Body of pancreas (tissue), 4 donors: ENCODE measurements at regions of chr9 and their contacts with region 1.

Region 1: DNA sequence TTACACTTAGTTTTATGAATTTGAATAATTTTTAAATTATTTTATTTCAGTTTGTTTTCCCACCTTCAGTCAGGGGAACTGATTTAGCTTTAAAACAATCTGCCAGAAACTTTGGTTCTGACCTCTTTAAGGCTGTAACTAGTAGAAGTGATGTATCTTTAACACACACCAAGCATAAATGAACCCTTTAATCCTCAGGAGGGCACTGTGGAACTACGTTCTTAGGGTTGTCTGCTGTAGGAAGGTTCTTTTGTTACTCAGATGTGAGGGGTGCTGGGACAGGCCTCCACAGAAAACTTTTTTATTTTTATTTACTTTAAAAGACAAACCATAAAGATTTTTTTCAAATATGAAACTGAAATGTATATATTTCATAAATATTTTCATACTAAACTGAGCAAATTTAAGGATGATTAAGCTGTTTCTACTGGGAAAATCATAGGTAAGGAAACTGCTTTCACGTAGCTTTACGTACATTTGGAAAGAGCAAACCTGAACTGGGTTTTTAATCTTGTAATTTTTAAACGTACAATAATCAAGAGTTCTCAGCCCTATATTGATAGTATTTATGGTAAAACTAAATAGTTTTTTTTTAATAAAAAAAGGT is 5.3 kb downstream of the KLF4 start:
- DNase-seq: peak; percentile 28 to 64 (median 31)
- ATAC-seq: peak; percentile 59
- H3K4me3 ChIP-seq: no peak overlapping the region
- H3K27ac ChIP-seq: no peak overlapping the region
- H3K4me1 ChIP-seq: peaks cover 22% of the 10 kb centered on the region
- H3K27me3 ChIP-seq: no peaks in the 10 kb centered on the region
- CTCF ChIP-seq: peak in 6 of 7 experiments; percentile 39 to 79 (median 68)
- POLR2A ChIP-seq: no peak

Region 2: GRCh38 chr9:107548048-107548800 is 64.0 kb after region 1 on chr9:
- intact Hi-C with region 1: no loop called
- DNase-seq: peak in 3 of 4 donors; percentile 9 to 51 (median 38)
- ATAC-seq: peak; percentile 65
- H3K4me3 ChIP-seq: no peak overlapping the region
- H3K27ac ChIP-seq: peak overlapping the region in 1 of 4 donors; percentile 1
- H3K4me1 ChIP-seq: peaks cover 37% of the 10 kb centered on the region
- H3K27me3 ChIP-seq: no peaks in the 10 kb centered on the region
- CTCF ChIP-seq: no peak
- POLR2A ChIP-seq: no peak

Region 3: DNA sequence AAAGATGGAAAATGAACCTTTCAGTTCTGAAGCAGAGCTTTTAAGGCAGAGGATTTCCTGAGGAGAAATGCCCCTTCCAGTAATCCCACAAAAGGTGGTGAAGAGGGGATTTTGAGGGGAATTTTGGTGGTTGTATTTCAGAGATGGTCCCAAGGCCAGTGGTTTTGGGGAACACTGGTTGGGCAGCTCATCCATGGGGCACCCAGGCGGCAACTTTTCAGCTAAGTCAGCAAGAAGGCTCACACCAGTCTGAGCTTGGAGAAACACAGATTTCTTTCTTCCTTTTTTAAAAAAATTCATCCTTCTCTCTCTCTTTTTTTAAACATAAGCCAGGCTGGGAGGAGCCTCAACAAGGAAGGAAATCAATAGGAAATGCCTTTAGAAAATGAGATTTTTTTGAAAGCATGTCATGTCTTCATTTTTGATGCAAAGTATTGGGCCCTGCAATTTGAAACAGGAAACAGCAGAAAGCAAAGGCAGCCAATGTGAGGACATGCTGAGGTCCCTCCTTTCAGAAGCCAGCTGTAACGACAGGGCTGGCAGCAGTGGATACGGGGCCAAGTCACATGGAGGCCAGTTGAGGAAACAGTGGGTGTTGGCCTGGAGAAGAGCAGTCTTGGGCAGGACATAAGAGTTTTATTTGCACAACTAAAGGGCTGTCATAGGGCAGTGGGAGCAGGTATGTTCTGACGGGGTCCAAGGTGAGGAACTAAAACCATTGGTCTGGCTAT is 160.7 kb after region 1 on chr9:
- intact Hi-C with region 1: no loop called
- DNase-seq: peak in 3 of 4 donors; percentile 12 to 61 (median 23)
- ATAC-seq: no peak
- H3K4me3 ChIP-seq: no peak overlapping the region
- H3K27ac ChIP-seq: peak overlapping the region in 1 of 4 donors; percentile 25
- H3K4me1 ChIP-seq: no peaks in the 10 kb centered on the region
- H3K27me3 ChIP-seq: no peaks in the 10 kb centered on the region
- CTCF ChIP-seq: no peak
- POLR2A ChIP-seq: no peak

Region 4: GRCh38 chr9:108565651-108566378 is 1081.6 kb after region 1 on chr9:
- intact Hi-C with region 1: loop called (anchors 5 kb)
- DNase-seq: peak; percentile 58 to 71 (median 68)
- ATAC-seq: peak; percentile 84
- H3K4me3 ChIP-seq: no peak overlapping the region
- H3K27ac ChIP-seq: no peak overlapping the region
- H3K4me1 ChIP-seq: no peaks in the 10 kb centered on the region
- H3K27me3 ChIP-seq: no peaks in the 10 kb centered on the region
- CTCF ChIP-seq: peak; percentile 64 to 91 (median 85)
- POLR2A ChIP-seq: no peak